Activated B cell treated with CpG ODN at 0.5 μM for 24 hours (primary cell): ENCODE measurements at regions of chr5 and their contacts with region 1.

Region 1: DNA sequence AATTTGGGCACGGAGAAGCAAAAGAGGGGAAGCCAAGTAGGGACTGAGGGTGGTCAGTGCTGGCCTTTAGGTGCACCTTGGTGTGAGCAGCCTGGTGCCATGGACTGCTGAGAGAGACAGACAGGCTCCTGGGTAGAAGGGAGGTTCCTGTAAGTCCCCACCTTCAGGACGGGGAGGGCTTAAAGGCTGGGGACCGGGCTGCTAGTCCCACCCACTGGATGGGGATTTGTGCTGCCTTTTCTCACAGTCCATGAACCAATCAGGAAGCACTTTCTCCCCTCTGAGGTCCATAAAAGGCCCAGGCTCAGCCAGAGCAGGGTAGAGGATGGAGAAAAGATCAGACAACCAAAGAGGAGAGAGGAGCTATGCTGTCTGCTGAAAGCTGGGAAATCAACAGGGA is 15.2 kb downstream of the CDC25C start:
- DNase-seq: no peak
- ATAC-seq: no peak
- H3K4me3 Mint-ChIP-seq: no peak overlapping the region
- H3K27ac Mint-ChIP-seq: no peak overlapping the region
- H3K4me1 Mint-ChIP-seq: no peaks in the 10 kb centered on the region
- H3K27me3 Mint-ChIP-seq: no peaks in the 10 kb centered on the region
- CTCF ChIP-seq: no peak

Region 2: GRCh38 chr5:138241688-138242571 is 74.4 kb before region 1 on chr5:
- CTCF ChIA-PET with region 1: no interaction called
- POLR2A ChIA-PET with region 1: no interaction called
- intact Hi-C with region 1: loop called (anchors 10 kb)
- DNase-seq: peak; percentile 16
- ATAC-seq: no peak
- H3K4me3 Mint-ChIP-seq: peak overlapping the region; percentile 60
- H3K27ac Mint-ChIP-seq: no peak overlapping the region
- H3K4me1 Mint-ChIP-seq: peaks cover 17% of the 10 kb centered on the region
- H3K27me3 Mint-ChIP-seq: peaks cover 38% of the 10 kb centered on the region
- CTCF ChIP-seq: no peak